Dorsolateral prefrontal cortex (tissue), 120 donors: ENCODE measurements at regions of chr10 and their contacts with region 1.

Region 1: DNA sequence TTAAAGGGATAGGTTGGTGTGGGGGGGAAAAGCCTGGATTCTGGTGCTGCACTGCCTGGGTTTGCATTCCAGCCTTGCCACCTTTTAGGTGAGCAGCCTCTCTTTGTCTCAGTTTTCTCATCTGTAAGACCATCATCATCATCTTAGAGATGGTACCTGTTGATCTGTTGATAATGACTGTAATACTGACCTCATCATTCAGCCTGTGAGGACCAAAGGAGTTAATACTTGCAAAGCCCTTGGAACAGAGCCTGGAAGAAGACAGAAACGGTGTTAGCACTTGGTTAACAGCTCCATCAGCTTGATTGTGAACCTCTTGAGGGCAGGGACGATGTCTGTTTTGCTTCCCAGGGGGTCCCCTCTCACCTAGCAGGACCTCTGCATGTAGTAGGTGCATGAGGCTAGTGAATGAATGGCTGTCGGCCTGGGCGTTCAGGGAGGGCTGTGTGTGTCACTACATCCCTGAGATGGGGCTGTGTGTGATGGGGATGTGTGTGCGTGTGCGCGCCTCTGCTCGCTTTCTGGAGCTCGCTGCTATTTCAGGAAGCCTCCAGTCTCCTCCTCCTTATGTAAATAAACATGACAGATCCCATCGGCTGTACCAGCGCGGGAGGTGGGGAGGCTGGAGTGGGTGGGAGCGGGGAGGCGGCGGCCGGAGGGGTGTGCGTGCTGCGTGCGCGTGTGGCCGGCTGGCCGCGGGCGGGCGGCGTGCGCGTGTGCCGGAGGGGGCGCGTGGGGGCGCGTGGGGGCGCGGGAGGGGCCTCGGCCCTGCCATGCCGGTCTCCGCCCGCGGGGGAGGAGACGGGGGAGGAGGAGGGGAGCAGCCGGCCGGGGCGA is 61.2 kb downstream of the NEURL1 start:
- DNase-seq: peak in 9 of 10 donors; percentile 36 to 75 (median 67)
- H3K4me3 ChIP-seq: peak overlapping the region; percentile 30 to 71 (median 56)
- H3K27ac ChIP-seq: peak overlapping the region in 53 of 59 donors; percentile 12 to 92 (median 75)
- H3K27me3 ChIP-seq: no peaks in the 10 kb centered on the region
- CTCF ChIP-seq: no peak

Region 2: GRCh38 chr10:103491493-103492381 is 63.0 kb before region 1 on chr10:
- intact Hi-C with region 1: loop called in 1 of 2 experiments (anchors 5 kb)
- DNase-seq: no peak
- H3K4me3 ChIP-seq: no peak overlapping the region
- H3K27ac ChIP-seq: peak overlapping the region in 37 of 59 donors; percentile 6 to 89 (median 62)
- H3K27me3 ChIP-seq: peaks cover 0 to 14% (median 0%) of the 10 kb centered on the region in 45 donors
- CTCF ChIP-seq: no peak